Activated T-helper 1 cell treated with anti-CD3 and anti-CD28 coated beads, Interleukin-12 subunit alpha, Interleukin-12 subunit beta, Interleukin-2, Interleukin-4 antibody, amounts not matched to agents 30 ng/mL and 10 ng/mL and 1 ng/mL, durations not matched to agents 14 hours and 24 hours and 36 hours (primary cell): ENCODE measurements at regions of chr3 and their contacts with region 1.

Region 1: GRCh38 chr3:108090701-108091451 is at the start of gene CD47:
- DNase-seq: peak; percentile 93
- H3K4me3 Mint-ChIP-seq: peak within 1 kb of the TSS; percentile 95
- H3K27ac Mint-ChIP-seq: peak within 1 kb of the TSS; percentile 99
- H3K4me1 Mint-ChIP-seq: peaks cover 23% of the 10 kb centered on the region
- H3K27me3 Mint-ChIP-seq: peaks cover 7% of the 10 kb centered on the region
- total RNA-seq, gene CD47: 98.3 and 105 TPM in 2 replicates

Region 2: DNA sequence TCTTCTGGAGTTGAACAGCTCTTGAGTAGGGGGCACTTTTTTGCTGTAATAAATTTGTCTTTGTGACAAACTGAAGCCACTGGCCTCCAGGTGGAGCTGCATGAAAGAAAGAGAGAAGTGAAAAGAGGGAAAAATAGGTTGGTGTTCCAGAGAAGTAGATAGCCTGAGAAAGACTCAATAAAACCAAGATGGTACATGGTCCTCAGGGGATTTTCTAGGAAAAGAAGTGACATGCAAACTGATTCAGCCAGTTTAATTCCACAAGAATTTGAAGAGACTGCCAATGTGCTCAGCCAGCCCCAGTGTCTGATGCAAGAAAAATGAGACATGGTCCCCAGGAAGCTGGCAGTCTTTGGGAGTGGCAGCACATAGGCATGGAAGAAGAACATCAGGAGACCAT is 152.7 kb before region 1 on chr3:
- intact Hi-C with region 1: loop called (anchors 1 kb)
- DNase-seq: no peak
- H3K4me3 Mint-ChIP-seq: no peak overlapping the region
- H3K27ac Mint-ChIP-seq: no peak overlapping the region
- H3K4me1 Mint-ChIP-seq: peaks cover 17% of the 10 kb centered on the region
- H3K27me3 Mint-ChIP-seq: peaks cover 5% of the 10 kb centered on the region

Region 3: DNA sequence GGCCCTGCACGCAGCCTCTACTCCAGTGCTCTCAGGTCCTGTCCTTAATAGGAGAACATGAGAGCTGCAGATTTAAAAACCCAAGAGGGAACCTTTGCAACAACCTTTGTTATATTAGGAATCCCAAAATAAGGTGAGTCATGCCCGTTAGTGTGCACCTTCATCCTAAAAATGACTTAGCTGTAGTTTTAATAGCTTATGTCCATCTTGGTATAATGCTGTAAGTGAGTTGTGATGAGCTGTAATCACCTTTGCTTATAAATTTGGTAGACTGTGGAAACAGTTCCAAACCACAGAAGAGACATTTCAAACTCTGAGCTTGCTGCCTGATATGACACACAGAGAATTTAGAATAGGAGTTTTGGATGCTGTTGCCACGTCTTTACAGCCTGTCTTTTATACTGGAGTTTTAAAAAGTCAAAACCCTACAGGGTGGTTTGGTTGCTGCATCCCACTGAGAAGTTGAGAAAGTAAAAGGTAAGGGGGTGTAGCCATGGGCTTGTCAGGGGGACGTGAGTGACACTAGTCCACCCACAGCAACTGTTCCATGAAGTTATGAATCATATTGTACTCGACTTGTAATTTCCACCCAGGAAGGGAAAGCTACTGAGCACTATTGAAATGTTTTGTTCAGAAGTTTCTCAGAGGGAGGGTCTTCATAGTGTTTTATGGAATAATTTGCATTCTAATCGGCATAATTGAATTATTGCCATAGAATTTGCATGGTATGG is 27.3 kb after region 1 on chr3:
- intact Hi-C with region 1: loop called (anchors 1 kb)
- DNase-seq: no peak
- H3K4me3 Mint-ChIP-seq: no peak overlapping the region
- H3K27ac Mint-ChIP-seq: peak overlapping the region; percentile 11
- H3K4me1 Mint-ChIP-seq: peaks cover 29% of the 10 kb centered on the region
- H3K27me3 Mint-ChIP-seq: peaks cover 8% of the 10 kb centered on the region

Region 4: DNA sequence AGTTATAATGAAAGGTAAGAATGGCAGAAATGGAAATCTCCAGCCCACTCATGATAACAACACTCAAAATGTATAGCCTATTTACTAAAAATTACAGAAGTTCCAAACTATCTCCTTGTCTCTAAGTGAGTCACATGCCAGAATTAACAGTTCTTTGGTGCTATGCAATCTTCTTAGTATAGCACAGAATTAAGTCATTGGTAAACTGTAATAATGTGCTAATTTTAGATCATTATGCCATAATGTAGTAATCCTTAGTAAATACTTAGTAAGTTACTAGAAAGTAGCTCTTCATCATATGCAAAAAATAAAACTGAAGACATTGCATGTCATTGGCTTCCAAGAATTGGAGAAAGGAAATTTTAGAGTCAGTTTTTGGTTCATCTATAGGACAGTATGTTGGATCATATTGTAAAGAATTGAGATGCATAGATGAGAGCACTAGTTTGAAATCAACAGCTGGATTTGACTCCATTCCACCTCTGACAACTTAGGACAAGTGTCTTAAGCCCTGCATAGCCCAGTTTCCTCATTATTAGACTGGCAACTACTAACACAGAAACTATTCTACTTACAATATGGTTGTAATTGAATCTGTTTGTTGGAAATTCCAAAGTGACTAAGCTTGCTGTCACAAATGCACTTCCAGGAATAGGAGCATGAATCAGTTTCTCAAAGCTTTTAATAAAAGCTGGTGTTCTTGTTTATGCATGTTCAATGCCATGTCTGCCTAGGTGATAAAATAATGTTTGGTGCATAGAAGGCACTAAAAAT is 40.0 kb after region 1 on chr3:
- intact Hi-C with region 1: loop called (anchors 1 kb)
- DNase-seq: no peak
- H3K4me3 Mint-ChIP-seq: peak overlapping the region; percentile 24
- H3K27ac Mint-ChIP-seq: peak overlapping the region; percentile 72
- H3K4me1 Mint-ChIP-seq: peaks cover 90% of the 10 kb centered on the region
- H3K27me3 Mint-ChIP-seq: no peaks in the 10 kb centered on the region

Region 5: GRCh38 chr3:108292905-108293328 is 202.0 kb after region 1 on chr3:
- intact Hi-C with region 1: loop called (anchors 1 kb)
- DNase-seq: no peak
- H3K4me3 Mint-ChIP-seq: peak overlapping the region; percentile 53
- H3K27ac Mint-ChIP-seq: peak overlapping the region; percentile 83
- H3K4me1 Mint-ChIP-seq: peaks cover 64% of the 10 kb centered on the region
- H3K27me3 Mint-ChIP-seq: peaks cover 2% of the 10 kb centered on the region

Region 6: GRCh38 chr3:108388136-108389132 is 297.6 kb after region 1 on chr3:
- intact Hi-C with region 1: loop called (anchors 5 kb)
- DNase-seq: no peak
- H3K4me3 Mint-ChIP-seq: no peak overlapping the region
- H3K27ac Mint-ChIP-seq: peak overlapping the region; percentile 50
- H3K4me1 Mint-ChIP-seq: peaks cover 24% of the 10 kb centered on the region
- H3K27me3 Mint-ChIP-seq: peaks cover 7% of the 10 kb centered on the region

Region 7: GRCh38 chr3:108513961-108514360 is 423.1 kb after region 1 on chr3:
- intact Hi-C with region 1: no loop called
- DNase-seq: no peak
- H3K4me3 Mint-ChIP-seq: no peak overlapping the region
- H3K27ac Mint-ChIP-seq: no peak overlapping the region
- H3K4me1 Mint-ChIP-seq: no peaks in the 10 kb centered on the region
- H3K27me3 Mint-ChIP-seq: peaks cover 7% of the 10 kb centered on the region

Region 8: GRCh38 chr3:109806929-109807328 is 1716.1 kb after region 1 on chr3:
- intact Hi-C with region 1: loop called (anchors 5 kb)
- DNase-seq: peak; percentile 30
- H3K4me3 Mint-ChIP-seq: peak overlapping the region; percentile 35
- H3K27ac Mint-ChIP-seq: peak overlapping the region; percentile 67
- H3K4me1 Mint-ChIP-seq: peaks cover 39% of the 10 kb centered on the region
- H3K27me3 Mint-ChIP-seq: peaks cover 8% of the 10 kb centered on the region